ENCODE measurements at regions of chr15 and their contacts with region 1.

Region 1: DNA sequence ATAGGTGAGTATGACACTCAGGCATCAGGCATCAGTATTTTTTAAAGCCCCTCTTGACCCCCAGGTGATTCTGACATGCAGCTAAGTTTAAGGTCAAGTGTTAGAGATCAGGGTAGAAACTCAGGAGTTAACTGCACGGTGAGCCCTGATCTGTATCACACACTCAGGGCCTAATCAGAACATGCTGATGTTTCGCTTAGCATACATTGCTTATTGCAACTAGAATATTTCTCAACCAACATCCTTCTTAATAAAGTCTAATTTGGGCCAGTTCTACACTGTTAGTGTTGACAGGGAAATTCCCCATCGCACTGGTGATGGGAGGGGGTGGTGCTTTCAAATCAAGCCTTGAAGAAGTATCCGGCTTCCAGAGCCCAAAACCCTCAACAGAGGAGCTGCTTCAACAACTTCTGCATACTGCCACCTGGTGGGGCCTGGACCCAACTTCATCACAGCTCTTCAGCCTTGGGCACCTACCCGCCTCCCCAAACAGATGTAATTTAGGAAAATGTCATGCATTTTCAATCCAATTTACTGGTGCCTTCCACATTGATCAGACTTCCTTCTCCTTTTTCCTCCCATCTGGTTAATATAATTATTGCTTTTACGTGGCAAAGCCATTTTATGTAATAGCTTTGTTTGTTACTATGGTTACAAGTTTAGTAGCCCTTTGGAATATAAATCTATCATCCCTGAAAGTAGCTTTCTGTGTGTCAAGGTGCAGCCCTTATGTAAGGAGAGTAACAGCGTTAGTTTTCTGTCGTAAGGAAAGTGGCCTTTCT is 312.2 kb downstream of the RORA start:
- DNase-seq: peak; percentile 94
- ATAC-seq: peak; percentile 94
- H3K4me3 Mint-ChIP-seq: no peak overlapping the region
- H3K27ac Mint-ChIP-seq: peak overlapping the region; percentile 51
- H3K4me1 Mint-ChIP-seq: peaks cover 27% of the 10 kb centered on the region
- H3K27me3 Mint-ChIP-seq: no peaks in the 10 kb centered on the region

Region 2: DNA sequence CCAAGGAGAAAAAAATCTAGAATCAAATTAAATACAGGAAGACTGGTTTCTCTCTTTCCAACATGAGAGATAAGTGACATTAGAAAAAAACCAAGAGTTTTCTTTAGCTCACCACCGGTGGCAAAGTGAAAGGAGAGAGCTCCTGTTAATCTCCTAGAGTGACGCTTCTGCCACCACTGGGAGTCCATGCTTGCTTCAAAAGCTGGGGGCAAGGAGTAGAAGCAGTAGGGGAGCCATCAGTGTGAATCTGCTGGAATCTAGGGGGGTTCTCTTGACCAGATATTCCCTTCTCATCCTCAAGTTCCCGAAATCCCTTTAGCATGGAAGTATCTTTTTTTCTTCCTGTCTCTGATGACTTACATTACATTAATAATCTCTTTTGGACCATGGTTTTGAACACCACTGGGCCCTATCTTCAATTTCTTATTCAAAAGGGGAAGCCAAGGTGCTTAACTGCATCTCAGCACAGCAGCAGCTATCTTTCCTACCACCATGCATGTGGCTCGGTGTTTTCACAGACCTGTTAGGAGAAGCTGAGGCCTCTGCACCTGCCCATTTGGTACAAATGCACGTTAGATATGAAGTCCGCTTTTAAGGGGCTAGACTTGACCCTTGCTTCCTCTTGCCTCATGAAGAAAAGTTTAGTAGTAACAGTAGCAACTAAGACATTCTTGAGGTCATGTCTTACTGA is 431.4 kb before region 1 on chr15:
- CTCF ChIA-PET with region 1: no interaction called
- POLR2A ChIA-PET with region 1: no interaction called
- intact Hi-C with region 1: no loop called
- DNase-seq: no peak
- ATAC-seq: no peak
- H3K4me3 Mint-ChIP-seq: no peak overlapping the region
- H3K27ac Mint-ChIP-seq: no peak overlapping the region
- H3K4me1 Mint-ChIP-seq: peaks cover 18% of the 10 kb centered on the region
- H3K27me3 Mint-ChIP-seq: no peaks in the 10 kb centered on the region

Region 3: DNA sequence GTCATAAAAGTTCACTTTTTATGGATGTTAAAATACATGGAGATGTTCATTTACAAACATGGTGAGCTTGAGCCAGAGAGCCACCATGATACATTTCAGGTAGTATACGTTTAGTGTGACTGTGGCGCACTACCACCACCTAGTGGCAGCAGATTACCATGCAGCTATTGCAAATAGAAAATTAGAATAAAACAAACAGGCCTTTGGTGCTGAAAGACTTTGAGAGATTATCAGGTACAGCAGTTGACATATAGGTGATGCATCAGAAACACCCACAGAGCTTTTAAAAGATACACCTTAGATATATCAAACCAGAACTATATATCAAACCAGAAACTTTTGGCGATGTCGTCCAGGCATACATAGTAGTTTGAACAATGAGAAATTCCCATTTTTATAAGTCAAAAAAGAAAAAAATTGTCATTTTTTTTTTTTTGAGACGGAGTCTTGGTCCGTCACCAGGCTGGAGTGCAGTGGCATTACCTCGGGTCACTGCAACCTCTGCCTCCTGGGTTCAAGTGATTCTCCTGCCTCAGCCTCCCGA is 396.0 kb before region 1 on chr15:
- CTCF ChIA-PET with region 1: interaction called, 13 read pairs
- POLR2A ChIA-PET with region 1: no interaction called
- intact Hi-C with region 1: no loop called
- DNase-seq: peak; percentile 90
- ATAC-seq: peak; percentile 68
- H3K4me3 Mint-ChIP-seq: no peak overlapping the region
- H3K27ac Mint-ChIP-seq: peak overlapping the region; percentile 41
- H3K4me1 Mint-ChIP-seq: peaks cover 45% of the 10 kb centered on the region
- H3K27me3 Mint-ChIP-seq: no peaks in the 10 kb centered on the region

Region 4: GRCh38 chr15:60580650-60581376 is 336.1 kb before region 1 on chr15:
- CTCF ChIA-PET with region 1: interaction called, 114 read pairs
- POLR2A ChIA-PET with region 1: interaction called, 4 read pairs
- intact Hi-C with region 1: loop called (anchors 1 kb)
- DNase-seq: peak; percentile 64
- ATAC-seq: peak; percentile 80
- H3K4me3 Mint-ChIP-seq: peak overlapping the region; percentile 54
- H3K27ac Mint-ChIP-seq: peak overlapping the region; percentile 87
- H3K4me1 Mint-ChIP-seq: peaks cover 90% of the 10 kb centered on the region
- H3K27me3 Mint-ChIP-seq: no peaks in the 10 kb centered on the region

Region 5: DNA sequence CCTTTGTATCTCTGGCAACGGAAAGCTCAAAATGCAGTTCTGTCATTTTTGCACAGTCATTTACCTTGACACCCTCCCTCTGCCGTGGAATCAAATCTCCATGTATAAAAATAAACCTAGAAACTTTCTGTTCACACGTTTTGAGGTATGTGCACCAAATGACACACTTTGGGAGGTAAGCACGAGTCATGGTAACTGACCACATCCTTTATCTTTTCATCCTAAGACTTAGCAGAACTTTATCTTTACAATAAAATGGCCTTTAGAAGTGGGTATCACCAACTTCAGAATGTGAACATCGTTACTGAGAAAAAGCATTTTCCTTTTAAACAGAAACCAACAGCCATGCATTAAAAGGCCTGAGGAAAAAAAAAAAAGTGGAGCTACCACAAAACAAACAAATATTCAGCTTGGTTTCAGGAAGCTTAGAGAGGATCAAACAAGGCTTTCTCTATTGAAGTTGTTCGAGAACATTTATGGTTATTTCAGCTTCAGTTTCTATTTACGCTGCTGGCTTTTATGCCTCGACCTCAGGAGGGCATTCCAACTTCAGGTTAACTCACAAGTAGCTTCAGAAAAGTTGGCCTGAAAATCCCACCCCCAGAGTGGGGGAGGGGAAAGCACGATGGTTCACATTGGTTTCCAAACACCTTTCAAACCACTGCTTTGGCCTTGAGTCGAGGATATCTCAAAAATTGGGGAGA is 266.9 kb before region 1 on chr15:
- CTCF ChIA-PET with region 1: interaction called, 7 read pairs
- POLR2A ChIA-PET with region 1: interaction called, 15 read pairs
- intact Hi-C with region 1: loop called (anchors 1 to 2 kb)
- DNase-seq: peak; percentile 68
- ATAC-seq: peak; percentile 89
- H3K4me3 Mint-ChIP-seq: peak overlapping the region; percentile 27
- H3K27ac Mint-ChIP-seq: peak overlapping the region; percentile 82
- H3K4me1 Mint-ChIP-seq: peaks cover 47% of the 10 kb centered on the region
- H3K27me3 Mint-ChIP-seq: no peaks in the 10 kb centered on the region

Region 6: GRCh38 chr15:60840306-60840702 is 76.6 kb before region 1 on chr15:
- CTCF ChIA-PET with region 1: interaction called, 4 read pairs
- POLR2A ChIA-PET with region 1: no interaction called
- intact Hi-C with region 1: loop called in 1 of 2 experiments (anchors 5 kb)
- DNase-seq: peak; percentile 34
- ATAC-seq: peak; percentile 5
- H3K4me3 Mint-ChIP-seq: peak overlapping the region; percentile 60
- H3K27ac Mint-ChIP-seq: peak overlapping the region; percentile 62
- H3K4me1 Mint-ChIP-seq: peaks cover 77% of the 10 kb centered on the region
- H3K27me3 Mint-ChIP-seq: peaks cover 2% of the 10 kb centered on the region

Region 7: DNA sequence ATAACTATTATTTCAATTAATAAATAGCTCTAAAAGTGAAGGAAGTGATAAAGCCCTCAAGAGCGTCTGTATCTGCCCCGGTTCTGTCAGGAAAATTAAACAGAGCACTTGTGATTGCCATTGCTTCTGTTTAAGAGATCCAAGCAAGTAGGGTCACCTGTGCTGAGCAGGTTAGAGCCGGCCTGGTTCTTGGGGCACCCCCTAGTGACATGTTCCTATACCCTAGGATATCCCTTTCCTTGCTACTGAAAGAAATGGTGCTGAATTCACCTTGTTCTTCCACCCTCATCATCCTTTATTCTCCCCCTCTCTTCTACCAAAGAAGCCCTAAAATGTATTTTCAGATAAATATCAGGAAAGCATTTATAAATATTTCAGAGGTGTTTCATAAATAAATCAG is 11.3 kb before region 1 on chr15:
- CTCF ChIA-PET with region 1: interaction called, 32 read pairs
- POLR2A ChIA-PET with region 1: no interaction called
- intact Hi-C with region 1: no loop called
- DNase-seq: peak; percentile 41
- ATAC-seq: no peak
- H3K4me3 Mint-ChIP-seq: no peak overlapping the region
- H3K27ac Mint-ChIP-seq: no peak overlapping the region
- H3K4me1 Mint-ChIP-seq: peaks cover 33% of the 10 kb centered on the region
- H3K27me3 Mint-ChIP-seq: peaks cover 12% of the 10 kb centered on the region

Region 8: DNA sequence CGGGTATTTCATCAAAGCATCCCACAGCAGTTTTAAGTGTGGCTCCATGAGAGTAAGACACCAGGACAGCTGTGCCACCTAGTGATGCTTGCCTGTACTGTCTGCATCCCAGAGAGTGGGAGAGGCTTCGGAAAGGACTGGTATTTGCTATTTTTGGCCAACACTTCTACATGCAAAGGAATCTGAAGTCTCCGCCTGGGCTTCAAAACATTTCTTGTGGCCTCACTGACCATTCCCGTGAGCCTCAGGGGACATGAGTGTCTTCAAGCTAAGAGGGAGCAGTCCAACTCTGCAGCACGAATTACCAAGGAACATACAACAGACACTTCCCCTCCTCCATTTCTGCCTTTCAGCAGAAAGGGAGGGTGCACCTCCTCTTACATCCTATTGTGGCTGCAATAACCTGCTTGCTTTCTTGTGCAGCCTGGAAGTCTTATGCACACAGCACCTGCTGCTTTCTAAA is 134.7 kb after region 1 on chr15:
- CTCF ChIA-PET with region 1: no interaction called
- POLR2A ChIA-PET with region 1: no interaction called
- intact Hi-C with region 1: no loop called
- DNase-seq: peak; percentile 12
- ATAC-seq: no peak
- H3K4me3 Mint-ChIP-seq: no peak overlapping the region
- H3K27ac Mint-ChIP-seq: no peak overlapping the region
- H3K4me1 Mint-ChIP-seq: no peaks in the 10 kb centered on the region
- H3K27me3 Mint-ChIP-seq: peaks cover 10% of the 10 kb centered on the region

Measured in activated CD4-positive, alpha-beta T cell treated with anti-CD3 and anti-CD28 coated beads for 36 hours (primary cell).